Activated naive CD4-positive, alpha-beta T cell treated with anti-CD3 and anti-CD28 coated beads for 36 hours (primary cell): ENCODE measurements at regions of chr6 and their contacts with region 1.

Region 1: GRCh38 chr6:14210663-14211561 is 93.3 kb downstream of the CD83 start:
- DNase-seq: peak; percentile 88
- H3K4me3 Mint-ChIP-seq: peak overlapping the region; percentile 79
- H3K27ac Mint-ChIP-seq: peak overlapping the region; percentile 71
- H3K4me1 Mint-ChIP-seq: peaks cover 12% of the 10 kb centered on the region
- H3K27me3 Mint-ChIP-seq: no peaks in the 10 kb centered on the region

Region 2: DNA sequence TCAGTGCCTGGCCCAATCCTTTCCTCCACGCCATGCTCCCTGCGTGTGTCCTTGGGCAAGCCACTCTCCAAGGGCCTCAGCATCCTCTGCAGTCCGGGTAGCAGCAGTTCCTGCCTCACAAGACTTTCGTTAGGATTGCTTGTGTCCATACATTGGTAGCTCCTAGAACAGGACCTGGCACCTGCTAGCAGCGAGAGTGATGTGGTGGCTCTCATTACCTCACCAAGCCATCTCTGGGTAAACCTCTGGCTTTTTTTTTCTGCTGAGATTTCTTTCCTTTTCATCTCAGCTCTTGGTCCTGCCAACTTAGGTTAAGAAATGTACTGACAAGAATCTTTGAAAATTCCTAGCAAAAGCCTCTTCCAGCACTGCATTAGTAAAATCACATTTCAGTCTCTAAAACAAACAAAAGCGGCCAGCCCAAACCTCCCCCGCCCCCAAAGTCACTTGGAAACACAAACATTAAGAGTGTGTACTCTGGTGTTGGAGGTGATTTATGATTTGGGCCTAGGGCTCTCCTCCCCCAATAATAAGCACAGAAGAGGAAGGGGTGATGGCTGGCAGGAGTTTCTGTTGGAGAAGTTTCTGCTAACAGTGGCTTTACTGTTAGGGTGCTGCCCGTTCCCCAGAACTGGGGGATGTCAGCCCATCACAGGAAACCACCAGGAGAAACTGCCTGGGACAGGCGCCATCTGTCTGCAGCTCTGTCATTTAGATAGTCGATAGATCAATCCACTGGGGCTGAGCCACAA is 105.9 kb after region 1 on chr6:
- CTCF ChIA-PET with region 1: interaction called, 3 read pairs
- intact Hi-C with region 1: loop called (anchors 2 kb)
- DNase-seq: peak; percentile 51
- H3K4me3 Mint-ChIP-seq: no peak overlapping the region
- H3K27ac Mint-ChIP-seq: no peak overlapping the region
- H3K4me1 Mint-ChIP-seq: peaks cover 4% of the 10 kb centered on the region
- H3K27me3 Mint-ChIP-seq: no peaks in the 10 kb centered on the region

Region 3: GRCh38 chr6:14542670-14543366 is 331.9 kb after region 1 on chr6:
- CTCF ChIA-PET with region 1: interaction called, 3 read pairs
- intact Hi-C with region 1: loop called (anchors 1 kb)
- DNase-seq: peak; percentile 92
- H3K4me3 Mint-ChIP-seq: no peak overlapping the region
- H3K27ac Mint-ChIP-seq: peak overlapping the region; percentile 64
- H3K4me1 Mint-ChIP-seq: peaks cover 24% of the 10 kb centered on the region
- H3K27me3 Mint-ChIP-seq: no peaks in the 10 kb centered on the region

Region 4: DNA sequence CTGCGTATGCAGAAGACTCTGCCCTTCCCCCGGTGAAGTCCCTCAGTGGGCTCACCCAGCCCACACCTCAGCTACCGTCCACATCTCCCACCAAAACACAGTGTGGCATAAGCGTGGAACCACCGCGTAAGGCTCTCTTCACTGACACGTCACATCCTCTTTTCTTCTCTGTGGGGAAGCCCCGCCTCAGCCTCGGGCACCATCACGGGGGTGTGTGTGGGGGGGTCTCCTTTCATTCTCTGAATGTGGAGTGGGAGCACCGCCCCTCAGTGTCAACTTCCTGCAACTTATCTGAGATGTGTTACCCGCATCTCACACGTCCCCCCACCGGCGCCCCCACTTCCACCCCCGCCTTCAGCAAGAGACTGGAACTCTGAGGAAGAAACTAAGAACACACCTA is 646.6 kb after region 1 on chr6:
- CTCF ChIA-PET with region 1: no interaction called
- intact Hi-C with region 1: loop called (anchors 5 kb)
- DNase-seq: peak; percentile 79
- H3K4me3 Mint-ChIP-seq: peak overlapping the region; percentile 36
- H3K27ac Mint-ChIP-seq: peak overlapping the region; percentile 91
- H3K4me1 Mint-ChIP-seq: peaks cover 28% of the 10 kb centered on the region
- H3K27me3 Mint-ChIP-seq: no peaks in the 10 kb centered on the region